Cardiac septum (tissue), 1 donor: ENCODE measurements at regions of chr7 and their contacts with region 1.

Region 1: DNA sequence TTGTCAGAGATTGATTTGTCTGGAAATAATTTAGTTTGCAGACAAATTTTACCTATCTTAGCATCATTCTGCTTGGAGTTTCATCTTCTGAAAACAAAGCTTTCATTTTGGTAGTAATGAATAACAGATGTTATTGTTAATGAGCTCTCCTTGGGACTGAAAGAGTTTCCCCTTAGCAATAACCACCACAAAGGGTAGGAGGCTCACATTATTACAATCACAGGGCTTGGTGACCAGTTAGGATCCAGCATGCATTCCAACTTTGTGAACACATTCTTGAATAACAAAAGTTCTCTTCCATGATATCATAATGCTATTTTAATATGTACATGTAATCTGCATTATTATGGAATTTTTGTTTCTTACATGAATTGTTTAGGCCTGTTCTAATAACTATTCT is 148.8 kb upstream of the VWC2 start:
- DNase-seq: no peak

Region 2: GRCh38 chr7:49660170-49660783 is 35.7 kb after region 1 on chr7:
- intact Hi-C with region 1: no loop called
- DNase-seq: no peak

Region 3: GRCh38 chr7:49776994-49777393 is 152.4 kb after region 1 on chr7:
- intact Hi-C with region 1: loop called (anchors 5 kb)
- DNase-seq: no peak